Prostate gland (tissue), 2 donors: ENCODE measurements at regions of chr12 and their contacts with region 1.

Region 1: DNA sequence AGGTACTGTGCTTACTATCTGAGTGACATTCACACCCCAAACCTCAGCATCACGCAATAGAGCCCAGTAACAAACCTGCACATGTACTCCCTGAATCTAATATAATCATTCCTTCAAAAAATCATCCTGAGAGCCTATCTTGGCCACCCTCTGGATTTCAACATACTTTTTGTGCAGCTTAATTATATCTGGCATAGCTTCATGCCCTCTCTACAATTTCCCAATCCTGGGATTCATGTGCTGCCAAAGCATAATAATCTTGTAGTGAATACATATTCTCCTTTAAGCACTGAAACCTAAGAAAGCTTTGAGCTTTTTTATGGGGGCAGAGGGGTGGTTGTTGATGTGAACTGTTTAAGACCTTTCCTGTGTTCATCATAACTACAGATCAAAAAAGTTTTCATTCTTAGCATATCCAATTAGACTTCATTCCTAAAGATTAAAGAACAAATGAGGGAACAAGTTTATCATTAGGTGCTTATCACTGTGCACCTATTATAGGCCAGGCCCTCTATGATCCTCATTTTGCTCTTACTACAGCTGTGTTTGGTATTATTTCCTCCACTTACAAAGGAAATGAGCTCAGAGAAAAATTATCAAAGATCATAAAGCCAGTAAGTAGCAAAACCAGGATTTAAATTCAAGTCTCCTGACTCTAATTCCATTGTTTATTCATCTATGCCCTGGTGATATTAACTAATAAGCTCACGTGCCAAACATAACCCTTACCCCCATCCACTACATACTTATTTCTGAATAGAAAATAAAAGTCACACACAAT is 51.2 kb downstream of the SINHCAF start:
- DNase-seq: no peak
- H3K4me3 ChIP-seq: no peak overlapping the region
- H3K27ac ChIP-seq: no peak overlapping the region
- H3K4me1 ChIP-seq: no peaks in the 10 kb centered on the region
- H3K27me3 ChIP-seq: no peaks in the 10 kb centered on the region
- CTCF ChIP-seq: no peak
- POLR2A ChIP-seq: no peak

Region 2: GRCh38 chr12:31324116-31324844 is 49.6 kb after region 1 on chr12:
- intact Hi-C with region 1: loop called (anchors 5 kb)
- DNase-seq: peak; percentile 65
- H3K4me3 ChIP-seq: peak overlapping the region; percentile 67 to 72
- H3K27ac ChIP-seq: peak overlapping the region; percentile 92 to 93
- H3K4me1 ChIP-seq: no peaks in the 10 kb centered on the region
- H3K27me3 ChIP-seq: no peaks in the 10 kb centered on the region
- CTCF ChIP-seq: peak in 2 of 4 experiments; percentile 0 to 7
- POLR2A ChIP-seq: peak; percentile 56